Ovary (tissue), 10 donors: ENCODE measurements at regions of chr4 and their contacts with region 1.

Region 1: DNA sequence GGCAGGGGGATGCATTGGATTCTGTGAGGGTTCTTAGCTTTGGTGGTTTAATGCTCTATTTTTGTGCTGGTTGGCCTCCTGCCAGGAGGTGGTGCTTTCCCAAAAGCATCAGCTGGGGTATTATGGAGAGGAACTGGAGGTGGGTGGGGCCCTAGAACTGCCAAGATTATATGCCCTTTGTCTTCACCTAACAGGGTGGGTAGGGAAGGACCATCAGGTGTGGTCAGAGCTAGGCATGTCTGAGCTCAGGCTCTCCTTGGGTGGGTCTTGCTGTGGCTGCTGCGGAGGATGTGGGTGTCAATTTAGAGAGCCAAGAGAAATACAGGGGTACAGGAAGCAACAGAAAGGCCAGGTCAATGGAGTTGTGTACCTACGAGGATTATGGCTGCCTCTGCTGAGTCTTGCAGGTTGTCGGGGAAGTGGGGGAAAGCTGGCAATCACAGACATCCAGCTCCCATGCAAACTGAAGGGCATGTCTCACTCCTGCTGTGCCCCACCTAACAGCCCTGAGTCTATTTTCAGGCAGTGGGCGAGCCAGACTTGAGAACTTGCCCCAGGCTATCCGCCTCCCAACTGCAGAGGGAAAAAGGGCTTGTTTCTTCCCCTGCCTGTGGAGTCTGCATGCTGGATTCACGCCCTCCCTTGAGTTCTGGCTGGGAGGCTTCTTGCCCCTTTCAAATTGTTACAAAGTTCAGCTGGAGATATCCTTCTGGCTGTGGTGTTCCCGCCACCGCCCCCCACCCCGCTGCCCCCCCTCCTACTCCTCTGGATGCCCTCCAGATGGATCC is 212.0 kb downstream of the COMMD8 start:
- DNase-seq: no peak
- H3K4me3 ChIP-seq: no peak overlapping the region
- H3K27ac ChIP-seq: no peak overlapping the region
- H3K4me1 ChIP-seq: no peaks in the 10 kb centered on the region
- H3K27me3 ChIP-seq: no peaks in the 10 kb centered on the region
- CTCF ChIP-seq: no peak
- EP300 ChIP-seq: no peak
- POLR2A ChIP-seq: no peak

Region 2: GRCh38 chr4:46720055-46720454 is 531.5 kb before region 1 on chr4:
- intact Hi-C with region 1: no loop called
- DNase-seq: no peak
- H3K4me3 ChIP-seq: no peak overlapping the region
- H3K27ac ChIP-seq: no peak overlapping the region
- H3K4me1 ChIP-seq: no peaks in the 10 kb centered on the region
- H3K27me3 ChIP-seq: no peaks in the 10 kb centered on the region
- CTCF ChIP-seq: no peak
- EP300 ChIP-seq: no peak
- POLR2A ChIP-seq: no peak

Region 3: DNA sequence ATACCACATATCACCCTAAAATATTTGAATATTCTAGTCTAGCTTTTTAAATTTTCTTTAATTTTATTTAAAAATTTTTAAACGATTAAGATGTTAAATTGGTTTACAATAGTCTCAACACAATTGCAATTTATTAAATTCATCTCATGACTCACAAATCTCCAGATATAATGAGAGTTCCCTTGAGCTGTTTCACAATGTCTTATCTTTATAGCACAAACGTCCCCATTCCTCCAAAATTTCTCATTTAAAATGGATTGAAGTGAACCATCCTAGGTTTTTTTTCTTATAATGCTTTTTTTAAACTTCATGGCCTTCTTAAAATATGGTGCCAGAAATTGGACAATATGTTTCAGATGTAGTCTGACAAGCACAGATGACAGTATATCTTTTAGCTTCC is 15.8 kb before region 1 on chr4:
- intact Hi-C with region 1: loop called in 1 of 4 experiments (anchors 1 kb)
- DNase-seq: no peak
- H3K4me3 ChIP-seq: no peak overlapping the region
- H3K27ac ChIP-seq: no peak overlapping the region
- H3K4me1 ChIP-seq: no peaks in the 10 kb centered on the region
- H3K27me3 ChIP-seq: no peaks in the 10 kb centered on the region
- CTCF ChIP-seq: no peak
- EP300 ChIP-seq: no peak
- POLR2A ChIP-seq: no peak

Region 4: GRCh38 chr4:47278631-47279030 is 27.1 kb after region 1 on chr4:
- intact Hi-C with region 1: no loop called
- DNase-seq: no peak
- H3K4me3 ChIP-seq: no peak overlapping the region
- H3K27ac ChIP-seq: no peak overlapping the region
- H3K4me1 ChIP-seq: no peaks in the 10 kb centered on the region
- H3K27me3 ChIP-seq: no peaks in the 10 kb centered on the region
- CTCF ChIP-seq: no peak
- EP300 ChIP-seq: no peak
- POLR2A ChIP-seq: no peak

Region 5: DNA sequence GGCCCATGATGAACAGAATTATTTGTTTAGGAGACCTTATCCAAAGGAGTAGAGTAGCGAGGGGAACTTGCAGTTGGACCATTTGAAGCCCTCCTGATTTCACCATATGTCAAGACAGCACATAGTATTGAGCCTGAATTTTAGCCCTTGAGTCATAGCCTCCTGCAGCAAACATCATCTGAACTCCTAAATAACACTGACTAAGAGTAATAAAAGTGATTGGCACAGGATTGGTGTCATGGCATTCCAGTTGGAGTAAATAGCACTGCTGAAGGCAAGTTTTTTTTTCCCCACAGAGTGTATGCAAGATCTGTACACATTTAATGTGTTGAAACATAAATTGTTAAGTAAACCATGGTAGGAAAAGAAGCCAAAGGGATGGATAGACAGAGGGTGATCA is 122.9 kb after region 1 on chr4:
- intact Hi-C with region 1: no loop called
- DNase-seq: no peak
- H3K4me3 ChIP-seq: no peak overlapping the region
- H3K27ac ChIP-seq: no peak overlapping the region
- H3K4me1 ChIP-seq: no peaks in the 10 kb centered on the region
- H3K27me3 ChIP-seq: no peaks in the 10 kb centered on the region
- CTCF ChIP-seq: no peak
- EP300 ChIP-seq: no peak
- POLR2A ChIP-seq: no peak

Region 6: DNA sequence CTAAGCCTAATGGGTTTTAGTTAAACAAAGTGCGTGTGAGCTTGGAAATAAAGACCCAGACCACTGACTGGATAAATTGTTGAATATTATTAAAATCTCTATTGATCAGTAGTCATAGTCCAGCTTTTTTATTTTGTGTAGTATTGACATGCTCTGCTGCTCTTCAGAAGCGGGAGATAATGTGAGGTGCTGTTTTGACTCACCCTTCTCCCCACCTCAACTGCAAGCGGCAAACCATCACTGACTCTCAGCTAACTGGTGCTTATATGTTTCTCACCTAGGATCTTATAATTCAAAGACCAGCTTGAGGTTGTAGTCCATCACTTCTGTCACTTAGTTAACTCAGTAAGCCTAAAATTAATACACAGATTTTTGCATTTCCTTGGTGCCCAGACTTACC is 139.7 kb after region 1 on chr4:
- intact Hi-C with region 1: no loop called
- DNase-seq: no peak
- H3K4me3 ChIP-seq: no peak overlapping the region
- H3K27ac ChIP-seq: no peak overlapping the region
- H3K4me1 ChIP-seq: no peaks in the 10 kb centered on the region
- H3K27me3 ChIP-seq: no peaks in the 10 kb centered on the region
- CTCF ChIP-seq: no peak
- EP300 ChIP-seq: no peak
- POLR2A ChIP-seq: no peak